HEK293 (cell line): ENCODE measurements at regions of chr2 and their contacts with region 1.

Region 1: GRCh38 chr2:58448065-58448507 is 207.0 kb upstream of the FANCL start:
- H3K4me3 ChIP-seq: no peak overlapping the region
- H3K27ac ChIP-seq: no peak overlapping the region
- H3K4me1 ChIP-seq: no peaks in the 10 kb centered on the region
- CTCF ChIP-seq: peak; percentile 85

Region 2: DNA sequence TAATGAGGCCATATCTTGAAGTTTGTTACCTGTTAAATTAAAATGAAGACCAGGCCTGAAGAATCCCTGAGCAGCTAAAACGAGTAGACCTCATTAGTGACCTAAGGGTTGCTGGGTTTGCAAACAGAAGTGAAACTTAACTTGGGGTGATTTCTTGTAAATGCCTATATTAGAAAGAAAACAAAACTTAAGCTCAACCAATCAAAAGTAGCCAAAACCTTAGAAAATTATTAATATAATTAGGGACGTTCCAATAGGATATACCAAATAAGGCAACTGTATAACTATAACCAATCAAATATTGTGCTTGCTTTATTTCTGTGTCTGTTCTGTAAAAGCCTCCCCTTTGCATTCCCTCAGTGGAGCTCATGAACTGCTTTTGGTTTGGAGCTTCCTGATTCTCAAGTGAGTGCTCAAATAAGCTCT is 539.3 kb before region 1 on chr2:
- CTCF ChIA-PET with region 1: interaction called, 13 read pairs
- POLR2A ChIA-PET with region 1: no interaction called
- H3K4me3 ChIP-seq: no peak overlapping the region
- H3K27ac ChIP-seq: no peak overlapping the region
- H3K4me1 ChIP-seq: no peaks in the 10 kb centered on the region
- CTCF ChIP-seq: no peak

Region 3: DNA sequence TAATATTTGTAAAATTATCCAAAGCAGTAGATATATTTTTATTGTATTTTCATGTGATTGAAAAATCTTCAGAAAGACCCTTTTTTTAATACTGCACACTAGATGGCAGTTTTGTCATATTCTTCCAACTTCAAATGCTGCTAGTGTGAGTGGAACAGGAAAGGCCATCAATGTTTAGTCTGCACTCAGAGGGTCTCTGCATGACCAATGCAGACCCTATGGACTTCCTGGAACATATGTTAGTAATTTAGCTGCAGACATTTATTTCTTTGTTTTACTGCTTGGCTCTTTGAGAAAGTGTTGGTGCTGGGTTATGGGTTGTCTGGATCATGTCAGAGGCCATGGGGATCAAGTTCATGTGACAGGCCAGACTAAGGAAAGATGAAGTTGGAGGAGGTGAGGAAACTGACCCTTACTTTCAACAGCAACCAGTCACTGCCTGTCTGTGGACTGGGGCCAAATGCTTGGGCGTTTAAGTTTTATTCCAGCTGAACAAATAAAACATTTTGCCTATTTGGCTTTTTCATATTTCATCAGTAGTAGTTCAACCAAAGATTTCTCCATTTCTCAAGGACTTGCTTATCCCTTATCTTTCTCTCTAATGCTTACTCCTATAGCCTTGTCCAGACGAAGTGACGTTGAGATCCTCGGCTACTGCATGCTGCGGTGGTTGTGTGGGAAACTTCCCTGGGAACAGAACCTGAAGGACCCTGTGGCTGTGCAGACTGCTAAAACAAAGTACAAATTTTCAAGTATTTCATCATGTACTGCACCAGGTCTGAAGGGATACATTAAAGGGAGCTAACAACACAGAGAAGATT is 316.7 kb before region 1 on chr2:
- CTCF ChIA-PET with region 1: interaction called, 10 read pairs
- POLR2A ChIA-PET with region 1: no interaction called
- H3K4me3 ChIP-seq: no peak overlapping the region
- H3K27ac ChIP-seq: no peak overlapping the region
- H3K4me1 ChIP-seq: no peaks in the 10 kb centered on the region
- CTCF ChIP-seq: no peak

Region 4: DNA sequence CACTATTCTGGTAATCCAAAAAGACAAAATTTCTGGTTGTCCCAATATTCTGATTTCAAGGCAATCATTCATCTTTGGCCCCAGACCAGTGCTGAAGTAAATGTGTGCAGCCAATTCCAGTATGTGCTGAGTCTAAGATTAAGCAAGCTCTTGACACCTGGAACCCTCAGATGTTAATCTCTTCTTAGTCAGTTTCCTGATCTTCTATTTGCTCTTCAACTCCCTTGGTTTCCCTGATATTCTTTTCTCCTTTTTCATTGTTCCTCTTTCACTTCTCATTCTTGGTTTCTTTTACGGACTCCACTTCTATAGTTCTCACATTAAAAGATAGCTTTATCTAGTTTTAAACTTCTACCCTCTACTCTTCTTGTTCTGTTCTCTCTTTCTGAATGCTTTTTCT is 238.7 kb after region 1 on chr2:
- CTCF ChIA-PET with region 1: no interaction called
- POLR2A ChIA-PET with region 1: no interaction called
- H3K4me3 ChIP-seq: no peak overlapping the region
- H3K27ac ChIP-seq: no peak overlapping the region
- H3K4me1 ChIP-seq: no peaks in the 10 kb centered on the region
- CTCF ChIP-seq: no peak